Transverse colon (tissue), 4 donors: ENCODE measurements at regions of chr18 and their contacts with region 1.

Region 1: DNA sequence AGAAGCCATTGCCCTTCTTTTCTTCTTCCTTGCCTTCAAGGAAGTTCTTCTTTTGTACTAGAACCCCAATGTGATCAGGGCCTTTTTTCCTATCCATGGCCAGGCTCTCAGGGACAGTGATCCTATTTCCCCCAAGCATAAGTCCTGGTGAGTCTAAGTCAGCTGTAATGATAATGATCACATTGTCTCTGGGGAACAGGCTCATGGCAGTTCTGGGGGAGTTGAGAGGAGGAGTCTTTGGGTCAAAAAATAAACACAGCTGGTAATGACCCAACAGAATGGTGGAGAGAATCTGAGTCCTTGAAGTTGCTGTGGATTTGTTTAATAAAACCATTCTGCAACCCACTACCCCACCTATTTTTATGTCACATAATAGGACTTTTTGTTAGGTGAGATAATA is 96.6 kb downstream of the SOCS6 start:
- DNase-seq: no peak
- H3K4me3 ChIP-seq: no peak overlapping the region
- H3K27ac ChIP-seq: no peak overlapping the region
- H3K4me1 ChIP-seq: peaks cover 0 to 7% (median 3%) of the 10 kb centered on the region in 4 donors
- H3K27me3 ChIP-seq: no peaks in the 10 kb centered on the region
- CTCF ChIP-seq: no peak
- EP300 ChIP-seq: no peak
- POLR2A ChIP-seq: no peak

Region 2: DNA sequence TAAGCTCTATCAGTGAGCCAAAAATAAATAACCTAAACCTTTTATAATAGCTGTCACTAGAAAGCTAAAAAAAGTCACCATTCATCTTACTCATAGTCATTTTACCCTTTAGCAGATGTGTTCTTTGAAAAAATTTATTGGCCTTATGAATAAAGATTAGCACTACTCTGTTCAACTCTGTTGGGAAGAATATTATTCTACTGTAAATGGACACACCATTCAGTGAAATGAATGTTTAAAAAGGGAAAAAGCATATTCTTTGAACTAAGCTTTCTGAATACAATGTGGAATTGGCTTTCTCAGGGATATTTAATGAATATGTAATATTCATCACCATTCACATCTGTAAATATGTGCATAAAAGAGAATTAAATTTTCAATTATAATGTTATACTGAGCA is 1736.6 kb after region 1 on chr18:
- in situ Hi-C with region 1: no loop called
- intact Hi-C with region 1: loop called (anchors 5 kb)
- DNase-seq: no peak
- H3K4me3 ChIP-seq: no peak overlapping the region
- H3K27ac ChIP-seq: no peak overlapping the region
- H3K4me1 ChIP-seq: no peaks in the 10 kb centered on the region
- H3K27me3 ChIP-seq: no peaks in the 10 kb centered on the region
- CTCF ChIP-seq: no peak
- EP300 ChIP-seq: no peak
- POLR2A ChIP-seq: no peak